ENCODE measurements at regions of chr11 and their contacts with region 1.

Region 1: GRCh38 chr11:124746621-124747243 is 5.3 kb downstream of the VSIG2 start:
- DNase-seq: peak; percentile 90
- ATAC-seq: peak; percentile 83
- H3K4me3 Mint-ChIP-seq: peak overlapping the region; percentile 89
- H3K27ac Mint-ChIP-seq: no peak overlapping the region
- H3K4me1 Mint-ChIP-seq: peaks cover 38% of the 10 kb centered on the region
- H3K27me3 Mint-ChIP-seq: peaks cover 100% of the 10 kb centered on the region
- CTCF ChIP-seq: peak; percentile 34; the same call in 1 of the 2 replicates

Region 2: GRCh38 chr11:124673333-124674167 is 73.2 kb before region 1 on chr11 and contains the starts of genes SIAE and SPA17:
- CTCF ChIA-PET with region 1: interaction called, 37 read pairs
- POLR2A ChIA-PET with region 1: interaction called, 3 read pairs
- DNase-seq: peak; percentile 96
- ATAC-seq: peak; percentile 97
- H3K4me3 Mint-ChIP-seq: peak within 1 kb of the TSS; percentile 90
- H3K27ac Mint-ChIP-seq: peak within 1 kb of the TSS; percentile 86
- H3K4me1 Mint-ChIP-seq: peaks cover 11% of the 10 kb centered on the region
- H3K27me3 Mint-ChIP-seq: peaks cover 23% of the 10 kb centered on the region
- CTCF ChIP-seq: no peak
- total RNA-seq, gene SIAE: 4.4 to 4.9 TPM (median 4.8 TPM) in 3 replicates
- total RNA-seq, gene SPA17: 3.5 to 3.8 TPM (median 3.5 TPM) in 3 replicates

Region 3: GRCh38 chr11:124778281-124778680 is 31.5 kb after region 1 on chr11:
- CTCF ChIA-PET with region 1: interaction called, 11 read pairs
- POLR2A ChIA-PET with region 1: no interaction called
- DNase-seq: no peak
- ATAC-seq: peak; percentile 34; the same call in 1 of the 2 replicates
- H3K4me3 Mint-ChIP-seq: no peak overlapping the region
- H3K27ac Mint-ChIP-seq: no peak overlapping the region
- H3K4me1 Mint-ChIP-seq: no peaks in the 10 kb centered on the region
- H3K27me3 Mint-ChIP-seq: no peaks in the 10 kb centered on the region
- CTCF ChIP-seq: no peak

Region 4: GRCh38 chr11:124800226-124800929 is 53.6 kb after region 1 on chr11 and contains the start of gene MSANTD2:
- CTCF ChIA-PET with region 1: interaction called, 13 read pairs
- POLR2A ChIA-PET with region 1: interaction called, 6 read pairs
- DNase-seq: peak; percentile 75
- ATAC-seq: peak; percentile 84
- H3K4me3 Mint-ChIP-seq: peak within 1 kb of the TSS; percentile 88
- H3K27ac Mint-ChIP-seq: peak within 1 kb of the TSS; percentile 84
- H3K4me1 Mint-ChIP-seq: peaks cover 33% of the 10 kb centered on the region
- H3K27me3 Mint-ChIP-seq: no peaks in the 10 kb centered on the region; the same call in 1 of the 2 replicates
- CTCF ChIP-seq: no peak
- total RNA-seq, gene MSANTD2: 16.5 to 17.5 TPM (median 16.8 TPM) in 3 replicates

Region 5: GRCh38 chr11:124865921-124866583 is 119.3 kb after region 1 on chr11:
- CTCF ChIA-PET with region 1: interaction called, 14 read pairs
- POLR2A ChIA-PET with region 1: no interaction called
- DNase-seq: peak; percentile 76
- ATAC-seq: peak; percentile 10; the same call in 1 of the 2 replicates
- H3K4me3 Mint-ChIP-seq: peak overlapping the region; percentile 60
- H3K27ac Mint-ChIP-seq: no peak overlapping the region
- H3K4me1 Mint-ChIP-seq: peaks cover 40% of the 10 kb centered on the region
- H3K27me3 Mint-ChIP-seq: peaks cover 100% of the 10 kb centered on the region
- CTCF ChIP-seq: peak; percentile 87